H1 (cell line): ENCODE measurements at regions of chr10 and their contacts with region 1.

Region 1: DNA sequence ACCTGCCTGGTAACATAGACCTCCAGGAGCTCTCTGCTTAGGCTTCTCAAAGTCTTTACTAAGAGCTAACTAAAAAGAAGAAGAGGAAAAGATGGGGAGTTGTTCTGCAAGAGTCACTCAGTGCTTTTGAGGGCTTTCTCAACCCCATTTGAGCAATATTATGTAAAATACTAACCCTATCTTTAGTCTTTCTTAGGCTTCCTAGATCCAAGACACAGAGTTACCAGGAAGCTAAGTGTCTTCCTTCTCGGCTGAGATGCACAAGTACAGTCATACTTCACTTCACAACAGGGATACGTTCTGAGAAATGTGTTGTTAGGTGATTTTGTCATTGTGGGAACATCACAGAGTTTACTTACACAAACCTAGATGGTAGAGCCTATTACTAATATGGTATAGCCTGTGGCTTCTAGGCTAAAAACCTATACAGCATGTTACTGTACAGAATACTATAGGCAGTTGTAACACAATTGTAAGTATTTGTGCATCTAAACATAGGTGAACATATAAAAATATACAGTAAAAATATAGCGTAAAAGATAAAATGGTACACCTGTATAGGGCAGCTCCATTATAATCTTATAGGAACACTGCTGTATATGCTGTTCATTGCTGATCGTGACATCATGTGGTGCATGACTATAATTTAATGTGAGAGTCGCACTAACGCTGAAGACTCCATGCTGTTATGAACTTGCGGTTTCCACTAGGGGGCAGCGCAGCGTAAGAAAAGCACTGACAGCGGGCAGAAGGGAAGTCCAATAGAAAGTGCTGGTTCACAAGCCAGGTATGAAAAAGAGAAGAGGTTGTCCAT is 16.3 kb downstream of the ANKRD22 start:
- DNase-seq: peak in 1 of 2 experiments; percentile 80
- H3K4me3 ChIP-seq: no peak overlapping the region
- H3K27ac ChIP-seq: no peak overlapping the region
- H3K4me1 ChIP-seq: no peaks in the 10 kb centered on the region
- H3K27me3 ChIP-seq: no peaks in the 10 kb centered on the region
- CTCF ChIP-seq: peak; percentile 69 to 95 (median 87)
- EP300 ChIP-seq: no peak
- POLR2A ChIP-seq: no peak
- RAD21 ChIP-seq: peak; percentile 97 to 98

Region 2: GRCh38 chr10:88092973-88093372 is 742.3 kb before region 1 on chr10:
- CTCF ChIA-PET with region 1: no interaction called
- POLR2A ChIA-PET with region 1: no interaction called
- DNase-seq: no peak
- H3K4me3 ChIP-seq: no peak overlapping the region
- H3K27ac ChIP-seq: no peak overlapping the region
- H3K4me1 ChIP-seq: no peaks in the 10 kb centered on the region
- H3K27me3 ChIP-seq: no peaks in the 10 kb centered on the region
- CTCF ChIP-seq: no peak
- EP300 ChIP-seq: no peak
- POLR2A ChIP-seq: no peak
- RAD21 ChIP-seq: no peak

Region 3: DNA sequence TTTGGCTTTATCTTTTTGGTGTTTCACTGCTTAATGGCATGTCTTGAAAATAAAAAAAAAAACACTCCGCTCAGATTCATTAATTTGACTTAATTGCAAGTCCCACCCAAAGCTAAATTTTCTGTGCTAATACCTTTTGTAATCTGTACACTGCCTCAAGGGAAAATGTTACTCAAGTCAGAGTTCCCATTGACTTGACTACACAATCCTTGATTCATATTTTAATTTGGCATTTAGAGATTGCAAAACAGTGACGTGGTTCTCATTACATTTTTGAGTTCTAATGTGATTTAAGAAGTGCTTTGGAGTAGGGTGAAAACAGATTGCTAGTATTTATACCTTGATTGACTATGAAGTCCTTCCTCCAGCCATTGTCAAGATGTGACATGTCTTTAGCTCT is 54.1 kb before region 1 on chr10:
- CTCF ChIA-PET with region 1: no interaction called
- POLR2A ChIA-PET with region 1: no interaction called
- DNase-seq: no peak
- H3K4me3 ChIP-seq: no peak overlapping the region
- H3K27ac ChIP-seq: no peak overlapping the region
- H3K4me1 ChIP-seq: no peaks in the 10 kb centered on the region
- H3K27me3 ChIP-seq: no peaks in the 10 kb centered on the region; a peak in 1 of 7 replicates
- CTCF ChIP-seq: no peak
- EP300 ChIP-seq: no peak
- POLR2A ChIP-seq: no peak
- RAD21 ChIP-seq: no peak

Region 4: GRCh38 chr10:88853155-88853881 is 18.0 kb after region 1 on chr10:
- CTCF ChIA-PET with region 1: interaction called, 49 read pairs
- POLR2A ChIA-PET with region 1: no interaction called
- DNase-seq: no peak
- H3K4me3 ChIP-seq: no peak overlapping the region
- H3K27ac ChIP-seq: no peak overlapping the region
- H3K4me1 ChIP-seq: peaks cover 0 to 3% (median 0%) of the 10 kb centered on the region in 4 experiments; a peak in 3 of 7 replicates
- H3K27me3 ChIP-seq: no peaks in the 10 kb centered on the region
- CTCF ChIP-seq: no peak
- EP300 ChIP-seq: no peak
- POLR2A ChIP-seq: no peak
- RAD21 ChIP-seq: no peak

Region 5: GRCh38 chr10:88880282-88881076 is 45.2 kb after region 1 on chr10:
- CTCF ChIA-PET with region 1: interaction called, 10 read pairs
- POLR2A ChIA-PET with region 1: interaction called, 4 read pairs
- DNase-seq: peak; percentile 49 to 82
- H3K4me3 ChIP-seq: peak overlapping the region; percentile 70 to 81 (median 77)
- H3K27ac ChIP-seq: peak overlapping the region; percentile 69
- H3K4me1 ChIP-seq: peaks cover 0 to 6% (median 2%) of the 10 kb centered on the region in 4 experiments; a peak in 3 of 7 replicates
- H3K27me3 ChIP-seq: peaks cover 0 to 3% (median 1%) of the 10 kb centered on the region in 4 experiments; a peak in 1 of 7 replicates
- CTCF ChIP-seq: peak in 1 of 3 experiments; percentile 8; a peak in 1 of 4 replicates
- EP300 ChIP-seq: no peak
- POLR2A ChIP-seq: peak in 1 of 2 experiments; percentile 75; a peak in 2 of 3 replicates
- RAD21 ChIP-seq: no peak

Region 6: GRCh38 chr10:88913127-88913526 is 77.8 kb after region 1 on chr10:
- CTCF ChIA-PET with region 1: interaction called, 12 read pairs
- POLR2A ChIA-PET with region 1: no interaction called
- DNase-seq: no peak
- H3K4me3 ChIP-seq: no peak overlapping the region
- H3K27ac ChIP-seq: no peak overlapping the region
- H3K4me1 ChIP-seq: no peaks in the 10 kb centered on the region
- H3K27me3 ChIP-seq: no peaks in the 10 kb centered on the region
- CTCF ChIP-seq: no peak
- EP300 ChIP-seq: no peak
- POLR2A ChIP-seq: no peak
- RAD21 ChIP-seq: no peak

Region 7: DNA sequence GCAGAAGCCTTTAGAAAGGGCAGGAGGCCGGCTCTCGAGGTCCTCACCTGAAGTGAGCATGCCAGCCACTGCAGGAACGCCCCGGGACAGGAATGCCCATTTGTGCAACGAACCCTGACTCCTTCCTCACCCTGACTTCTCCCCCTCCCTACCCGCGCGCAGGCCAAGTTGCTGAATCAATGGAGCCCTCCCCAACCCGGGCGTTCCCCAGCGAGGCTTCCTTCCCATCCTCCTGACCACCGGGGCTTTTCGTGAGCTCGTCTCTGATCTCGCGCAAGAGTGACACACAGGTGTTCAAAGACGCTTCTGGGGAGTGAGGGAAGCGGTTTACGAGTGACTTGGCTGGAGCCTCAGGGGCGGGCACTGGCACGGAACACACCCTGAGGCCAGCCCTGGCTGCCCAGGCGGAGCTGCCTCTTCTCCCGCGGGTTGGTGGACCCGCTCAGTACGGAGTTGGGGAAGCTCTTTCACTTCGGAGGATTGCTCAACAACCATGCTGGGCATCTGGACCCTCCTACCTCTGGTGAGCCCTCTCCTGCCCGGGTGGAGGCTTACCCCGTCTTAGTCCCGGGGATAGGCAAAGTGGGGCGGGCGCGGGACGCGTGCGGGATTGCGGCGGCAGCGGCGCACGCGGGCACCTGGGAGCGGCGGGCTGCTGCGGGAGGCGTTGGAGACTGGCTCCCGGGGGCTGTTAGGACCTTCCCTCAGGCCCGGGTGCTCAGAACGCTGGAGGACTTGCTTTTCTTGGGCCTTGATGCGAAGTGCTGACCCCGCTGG is 155.3 kb after region 1 on chr10 and contains the start of gene FAS:
- CTCF ChIA-PET with region 1: interaction called, 16 read pairs
- POLR2A ChIA-PET with region 1: no interaction called
- DNase-seq: peak in 1 of 2 experiments; percentile 74
- H3K4me3 ChIP-seq: peak within 1 kb of the TSS; percentile 68 to 88 (median 87)
- H3K27ac ChIP-seq: peak within 1 kb of the TSS; percentile 30; the same call in 1 of the 2 replicates
- H3K4me1 ChIP-seq: peaks cover 0 to 9% (median 1%) of the 10 kb centered on the region in 4 experiments; a peak in 3 of 7 replicates
- H3K27me3 ChIP-seq: peaks cover 0 to 13% (median 7%) of the 10 kb centered on the region in 4 experiments; a peak in 6 of 7 replicates
- CTCF ChIP-seq: no peak
- EP300 ChIP-seq: no peak
- POLR2A ChIP-seq: 0 out of 3 replicates have a peak, but pooled peaks of 1 of the 2 experiments have one; percentile 39
- RAD21 ChIP-seq: no peak
- total RNA-seq, gene FAS: 4.0 and 5.4 TPM in 2 replicates

Region 8: DNA sequence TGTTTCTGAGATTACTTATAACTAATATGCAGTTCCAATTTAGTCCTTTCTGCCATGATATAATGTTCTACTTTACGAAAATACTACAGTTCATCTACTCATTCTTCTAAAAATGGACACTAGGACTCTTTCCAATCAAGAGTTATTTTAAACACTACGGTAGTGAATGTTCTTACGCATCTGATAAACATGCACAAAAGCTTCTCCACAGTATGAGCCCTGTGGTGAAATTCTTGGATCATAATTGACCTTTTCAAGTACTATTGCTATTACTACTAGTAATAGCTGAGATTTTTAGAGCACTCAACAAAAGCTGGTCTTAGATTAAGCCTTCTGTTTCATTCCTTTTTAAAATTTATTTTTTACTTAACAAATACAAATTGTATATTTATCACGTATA is 265.4 kb after region 1 on chr10:
- CTCF ChIA-PET with region 1: no interaction called
- POLR2A ChIA-PET with region 1: no interaction called
- DNase-seq: no peak
- H3K4me3 ChIP-seq: no peak overlapping the region
- H3K27ac ChIP-seq: no peak overlapping the region
- H3K4me1 ChIP-seq: no peaks in the 10 kb centered on the region
- H3K27me3 ChIP-seq: no peaks in the 10 kb centered on the region
- CTCF ChIP-seq: no peak
- EP300 ChIP-seq: no peak
- POLR2A ChIP-seq: no peak
- RAD21 ChIP-seq: no peak